ENCODE measurements at regions of chr2 and their contacts with region 1.

Region 1: GRCh38 chr2:128215897-128216642 is 102.6 kb downstream of the HS6ST1 start:
- DNase-seq: no peak
- H3K4me3 ChIP-seq: no peak overlapping the region
- H3K27ac ChIP-seq: no peak overlapping the region
- H3K4me1 ChIP-seq: no peaks in the 10 kb centered on the region
- H3K27me3 ChIP-seq: no peaks in the 10 kb centered on the region
- CTCF ChIP-seq: no peak

Region 2: DNA sequence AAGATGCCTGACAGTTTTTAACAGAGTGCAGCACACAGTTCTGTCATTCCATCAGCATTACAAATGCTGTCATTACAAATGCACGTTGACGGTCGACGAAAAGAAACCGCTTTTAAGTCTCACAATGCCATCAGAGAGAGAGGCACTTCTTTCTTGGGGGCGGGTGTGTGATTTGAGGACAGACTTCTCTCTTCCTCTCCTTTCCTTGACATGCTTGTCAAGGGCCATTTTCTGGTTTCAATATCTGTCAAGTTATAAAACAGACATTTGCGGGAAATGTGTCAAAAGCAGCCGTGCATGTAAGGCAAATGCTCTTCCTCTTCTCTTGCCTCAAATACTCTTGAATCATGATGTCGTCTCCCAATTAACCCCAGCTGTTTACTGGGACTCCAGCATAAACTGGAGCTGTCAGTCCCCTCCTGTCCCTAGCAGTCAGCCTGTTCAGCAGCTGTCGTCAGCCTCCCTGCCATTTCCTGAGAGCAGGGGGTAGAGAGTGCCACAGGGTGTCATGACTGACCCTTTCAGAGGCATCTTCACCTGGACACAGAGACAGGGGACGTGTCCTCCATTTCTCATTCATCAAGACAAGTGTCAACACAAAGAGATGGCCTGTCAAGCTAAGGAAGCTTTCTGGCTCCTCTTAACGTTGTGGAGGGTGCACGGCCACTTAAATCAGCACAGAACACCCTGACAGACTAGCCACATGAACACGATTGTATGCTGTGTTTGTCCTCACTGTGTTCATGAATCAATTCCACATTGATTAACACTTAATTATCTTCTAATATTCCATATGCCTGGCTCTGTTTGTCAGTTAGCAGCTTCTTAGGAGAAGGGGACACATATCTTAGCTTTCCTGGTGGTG is 1458.0 kb after region 1 on chr2:
- CTCF ChIA-PET with region 1: interaction called, 10 read pairs
- POLR2A ChIA-PET with region 1: no interaction called
- intact Hi-C with region 1: no loop called
- DNase-seq: no peak
- H3K4me3 ChIP-seq: no peak overlapping the region
- H3K27ac ChIP-seq: no peak overlapping the region
- H3K4me1 ChIP-seq: no peaks in the 10 kb centered on the region
- H3K27me3 ChIP-seq: peaks cover 19% of the 10 kb centered on the region
- CTCF ChIP-seq: no peak

Measured in A673 (cell line).